ENCODE measurements at regions of chr20 and their contacts with region 1.

Region 1: DNA sequence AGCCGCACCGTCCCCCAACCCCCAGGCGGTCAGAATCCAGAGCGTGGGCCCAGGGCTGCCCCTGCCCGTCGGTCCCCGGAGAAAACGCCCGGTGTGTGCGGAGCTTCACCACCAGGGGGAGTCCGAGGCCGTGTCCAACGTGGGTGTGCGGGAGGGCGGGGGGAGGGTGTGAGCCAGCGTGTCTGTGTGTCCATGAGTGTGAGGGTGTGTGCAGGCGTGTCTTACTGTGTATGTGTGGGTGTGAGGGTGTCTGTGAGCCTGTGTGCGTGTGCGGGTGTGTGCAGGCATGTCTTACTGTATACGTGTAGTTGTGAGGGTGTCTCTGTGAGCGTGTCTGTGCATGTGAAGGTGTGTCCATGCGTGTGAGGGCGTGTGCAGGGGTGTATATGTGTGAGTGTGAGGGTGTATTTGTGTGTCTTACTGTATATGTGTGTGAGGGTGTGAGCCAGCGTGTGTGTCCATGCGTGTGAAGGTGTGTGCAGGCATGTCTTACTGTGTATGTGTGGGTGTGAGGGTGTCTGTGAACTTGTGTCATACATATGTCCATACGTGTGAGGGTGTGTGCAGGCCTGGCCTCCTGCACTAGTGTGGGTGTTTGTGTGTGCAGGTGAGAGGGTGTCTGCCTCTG is 24.6 kb upstream of the GATA5 start:
- DNase-seq: peak; percentile 77 to 91 (median 77)
- ATAC-seq: peak; percentile 56 to 82 (median 70)
- H3K4me3 ChIP-seq: no peak overlapping the region
- H3K27ac ChIP-seq: no peak overlapping the region
- H3K4me1 ChIP-seq: peaks cover 0 to 22% (median 11%) of the 10 kb centered on the region in 12 donors
- H3K27me3 ChIP-seq: peaks cover 0 to 14% (median 0%) of the 10 kb centered on the region in 9 donors
- CTCF ChIP-seq: peak; percentile 70 to 88 (median 80)
- POLR2A ChIP-seq: no peak

Region 2: GRCh38 chr20:62302341-62303058 is 197.9 kb before region 1 on chr20 and contains the start of gene ADRM1:
- intact Hi-C with region 1: loop called in 7 of 10 experiments (anchors 5 to 10 kb)
- DNase-seq: peak; percentile 97 to 98 (median 97)
- ATAC-seq: peak; percentile 83 to 90 (median 90)
- H3K4me3 ChIP-seq: peak within 1 kb of the TSS; percentile 59 to 96 (median 88)
- H3K27ac ChIP-seq: peak within 1 kb of the TSS; percentile 89 to 100 (median 98)
- H3K4me1 ChIP-seq: peaks cover 9 to 36% (median 25%) of the 10 kb centered on the region in 12 donors
- H3K27me3 ChIP-seq: no peaks in the 10 kb centered on the region
- CTCF ChIP-seq: peak; percentile 88 to 99 (median 98)
- POLR2A ChIP-seq: peak; percentile 38 to 81
- total RNA-seq, gene ADRM1: 66.8 to 218 (median 79.8) TPM

Region 3: GRCh38 chr20:62587757-62588402 is 87.5 kb after region 1 on chr20:
- intact Hi-C with region 1: loop called in 1 of 10 experiments (anchors 10 kb)
- DNase-seq: peak in 2 of 5 donors; percentile 23 to 63
- ATAC-seq: no peak
- H3K4me3 ChIP-seq: no peak overlapping the region
- H3K27ac ChIP-seq: no peak overlapping the region
- H3K4me1 ChIP-seq: peaks cover 0 to 7% (median 0%) of the 10 kb centered on the region in 12 donors
- H3K27me3 ChIP-seq: peaks cover 0 to 48% (median 11%) of the 10 kb centered on the region in 9 donors
- CTCF ChIP-seq: no peak
- POLR2A ChIP-seq: no peak

Region 4: DNA sequence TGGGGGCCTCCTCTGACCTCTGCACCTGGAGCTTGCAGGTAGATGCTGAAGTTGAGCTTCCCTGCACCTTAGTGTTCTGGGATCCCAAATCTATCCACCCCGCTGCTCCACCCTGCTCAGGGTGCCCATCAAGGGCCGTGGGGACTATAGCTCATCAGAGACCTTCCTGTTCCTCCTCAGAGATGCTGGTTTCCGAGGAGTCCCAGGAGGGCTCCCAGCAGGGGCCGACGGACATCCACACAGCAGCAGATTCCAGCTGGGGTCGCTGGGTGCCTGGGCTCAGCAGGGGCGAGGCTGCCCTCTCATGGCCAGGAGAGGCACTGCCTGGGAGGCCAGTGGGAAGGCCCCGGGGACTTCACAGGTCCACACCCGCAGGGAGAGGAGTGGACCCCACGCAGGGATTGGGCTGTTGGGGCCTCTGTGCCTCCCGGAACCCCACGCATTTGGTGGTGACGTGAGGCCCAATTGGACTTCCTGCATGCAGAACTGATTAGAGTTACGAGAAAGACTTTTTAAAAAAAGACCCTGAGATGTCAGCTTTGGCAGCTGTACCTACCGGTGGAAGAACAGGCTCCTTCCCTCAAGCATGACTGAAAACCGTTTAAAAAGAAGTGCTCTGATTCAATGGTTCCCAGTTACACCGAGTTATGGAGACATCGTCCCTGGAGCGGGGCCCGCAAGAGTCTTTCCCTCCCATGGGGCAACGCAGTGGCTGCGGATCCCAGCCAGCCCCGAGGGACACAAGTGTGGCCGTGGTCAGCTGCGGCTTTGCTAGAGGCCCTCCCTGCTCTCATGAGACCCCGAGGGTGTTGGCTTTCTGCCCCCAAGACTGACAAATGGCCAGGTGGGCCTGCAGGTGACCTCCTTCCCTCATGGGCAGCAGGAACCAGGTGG is 116.6 kb after region 1 on chr20:
- intact Hi-C with region 1: loop called in 9 of 10 experiments (anchors 1 to 5 kb)
- DNase-seq: peak; percentile 59 to 92 (median 82)
- ATAC-seq: peak; percentile 63 to 90 (median 78)
- H3K4me3 ChIP-seq: no peak overlapping the region
- H3K27ac ChIP-seq: peak overlapping the region; percentile 44 to 96 (median 76)
- H3K4me1 ChIP-seq: peaks cover 0 to 40% (median 25%) of the 10 kb centered on the region in 12 donors
- H3K27me3 ChIP-seq: no peaks in the 10 kb centered on the region
- CTCF ChIP-seq: peak; percentile 89 to 97 (median 94)
- POLR2A ChIP-seq: no peak

Region 5: DNA sequence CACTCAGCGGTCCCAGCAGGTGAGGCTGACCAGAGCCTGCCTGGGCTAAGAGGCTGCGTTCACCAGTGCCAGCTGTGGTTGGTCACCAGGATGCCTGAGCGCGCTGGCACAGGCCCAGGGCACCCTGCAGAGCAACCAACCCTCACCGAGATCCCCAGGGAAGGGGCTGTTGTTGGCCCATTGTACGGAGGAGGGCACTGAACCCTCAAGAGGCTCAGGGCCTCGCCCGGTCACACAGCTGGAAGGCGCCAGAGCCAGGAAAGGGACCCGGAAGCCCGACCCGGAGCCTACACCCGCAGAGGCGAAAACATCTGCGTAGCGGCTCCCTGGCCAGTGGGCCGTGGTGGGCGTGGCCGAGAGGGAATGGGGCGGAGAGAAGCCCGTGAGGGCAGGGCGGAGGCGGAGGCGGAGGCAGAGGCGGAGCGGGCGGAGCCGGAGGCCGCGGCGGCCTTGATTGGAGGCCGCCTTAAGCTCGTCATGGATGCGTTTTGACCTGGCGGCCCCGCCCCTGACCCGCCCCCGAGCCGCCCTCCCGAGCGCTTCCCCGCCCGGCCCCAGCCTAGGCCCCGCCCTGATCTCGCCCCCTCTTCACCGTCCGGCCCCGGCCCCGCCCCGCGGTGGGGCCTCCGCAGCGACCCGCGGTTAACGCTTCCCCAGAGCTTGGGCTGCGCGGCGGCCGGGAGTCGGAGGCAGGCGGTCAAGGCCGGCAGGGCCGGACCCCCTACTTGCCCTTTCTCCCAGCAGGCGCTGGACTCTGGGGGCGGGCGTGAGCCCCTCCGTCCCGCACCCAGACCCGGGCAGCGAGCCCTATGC is 293.8 kb after region 1 on chr20:
- intact Hi-C with region 1: loop called (anchors 1 to 10 kb)
- DNase-seq: peak; percentile 96 to 100 (median 97)
- ATAC-seq: peak; percentile 89 to 94 (median 92)
- H3K4me3 ChIP-seq: peak overlapping the region; percentile 31 to 97 (median 78)
- H3K27ac ChIP-seq: peak overlapping the region; percentile 14 to 96 (median 92)
- H3K4me1 ChIP-seq: peaks cover 4 to 50% (median 23%) of the 10 kb centered on the region in 12 donors
- H3K27me3 ChIP-seq: no peaks in the 10 kb centered on the region
- CTCF ChIP-seq: no peak
- POLR2A ChIP-seq: peak; percentile 71 to 93

Measured in heart left ventricle (tissue), 16 donors.